Naive thymus-derived CD8-positive, alpha-beta T cell (primary cell): ENCODE measurements at regions of chr12 and their contacts with region 1.

Region 1: DNA sequence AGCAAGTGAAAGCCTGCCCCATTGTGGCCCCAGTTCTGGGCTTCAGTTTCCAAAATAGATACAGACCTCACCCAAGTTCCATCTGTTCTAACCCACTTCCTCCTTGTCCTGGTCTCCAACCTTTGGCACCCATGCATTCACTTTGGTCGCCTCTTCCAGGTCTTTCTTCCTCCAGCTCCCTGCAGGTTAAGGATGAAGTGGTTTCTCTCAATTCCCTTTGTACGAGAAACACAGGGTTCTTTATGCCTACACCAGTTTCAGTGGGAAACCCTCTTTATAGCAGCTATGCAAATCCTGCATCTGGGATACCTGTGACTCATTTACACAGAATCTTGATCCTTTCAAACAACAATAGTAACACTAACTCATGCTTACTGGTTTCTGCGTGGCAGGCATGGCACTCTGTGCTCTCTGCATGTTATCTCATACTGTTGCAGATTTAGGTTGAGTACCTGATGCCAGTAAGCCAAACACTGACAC is 110.6 kb upstream of the AMIGO2 start:
- DNase-seq: no peak
- ATAC-seq: no peak
- H3K4me3 Mint-ChIP-seq: peak overlapping the region in 9 of 10 donors; percentile 40 to 87 (median 80)
- H3K27ac Mint-ChIP-seq: peak overlapping the region; percentile 79 to 100 (median 92)
- H3K4me1 Mint-ChIP-seq: peaks cover 56 to 95% (median 89%) of the 10 kb centered on the region in 4 donors
- H3K27me3 Mint-ChIP-seq: no peaks in the 10 kb centered on the region

Region 2: DNA sequence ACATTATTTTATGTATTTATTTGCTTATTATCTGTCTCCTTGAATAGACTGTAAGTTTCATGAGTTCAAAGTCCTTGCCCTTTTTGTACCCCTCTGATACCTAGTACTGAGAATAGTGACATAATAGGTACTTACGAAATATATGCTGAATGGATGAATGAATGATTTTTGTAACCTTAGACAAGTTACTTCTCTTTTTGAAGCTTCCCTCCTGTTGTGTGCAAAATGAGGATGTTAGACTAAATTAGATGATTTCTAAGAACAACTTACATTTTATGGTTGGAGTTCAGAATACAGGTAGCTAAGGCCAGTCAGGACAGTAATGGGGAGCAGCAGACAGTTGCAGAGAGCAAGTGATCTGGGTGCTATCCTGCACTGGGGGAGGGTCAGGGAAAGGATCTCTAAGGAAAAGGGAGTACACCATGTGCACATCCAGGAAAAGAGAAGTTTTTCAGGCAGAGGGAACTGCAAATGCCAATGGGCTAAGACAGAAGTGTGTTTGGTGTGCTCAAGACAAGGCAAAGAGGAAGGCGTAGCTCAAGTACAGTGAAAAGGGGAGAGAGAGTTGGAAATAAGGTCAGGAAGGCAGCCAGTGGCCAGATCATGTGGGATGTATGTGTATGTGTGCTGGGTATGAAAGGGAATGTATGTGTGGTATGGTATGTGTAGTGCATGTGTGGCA is 51.2 kb before region 1 on chr12:
- POLR2A ChIA-PET with region 1: no interaction called
- DNase-seq: no peak
- ATAC-seq: no peak
- H3K4me3 Mint-ChIP-seq: no peak overlapping the region
- H3K27ac Mint-ChIP-seq: peak overlapping the region in 4 of 10 donors; percentile 7 to 27 (median 16)
- H3K4me1 Mint-ChIP-seq: peaks cover 6 to 17% (median 7%) of the 10 kb centered on the region in 4 donors
- H3K27me3 Mint-ChIP-seq: no peaks in the 10 kb centered on the region

Region 3: DNA sequence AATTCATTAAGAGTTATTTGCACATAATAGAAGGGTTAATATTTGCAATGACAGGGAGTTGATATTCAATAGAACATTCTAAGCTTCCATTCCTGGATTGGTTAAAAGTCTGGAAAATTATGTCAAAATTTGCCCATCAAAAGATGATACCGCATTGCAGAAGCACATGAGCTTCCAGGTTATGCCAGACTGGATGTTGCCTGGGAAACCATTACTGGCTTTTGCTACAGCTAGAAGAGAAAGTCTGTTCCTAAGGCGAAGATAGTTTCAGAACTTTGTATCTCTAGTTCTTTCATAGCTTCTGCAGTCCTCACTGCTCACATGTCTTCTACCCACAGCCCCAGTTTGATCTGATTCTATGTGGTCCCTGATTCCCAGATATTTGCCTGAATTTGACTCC is 11.9 kb after region 1 on chr12:
- POLR2A ChIA-PET with region 1: interaction called, 211 read pairs
- DNase-seq: no peak
- ATAC-seq: no peak
- H3K4me3 Mint-ChIP-seq: peak overlapping the region in 4 of 10 donors; percentile 26 to 35 (median 34)
- H3K27ac Mint-ChIP-seq: peak overlapping the region; percentile 37 to 98 (median 78)
- H3K4me1 Mint-ChIP-seq: peaks cover 47 to 86% (median 85%) of the 10 kb centered on the region in 4 donors
- H3K27me3 Mint-ChIP-seq: no peaks in the 10 kb centered on the region

Region 4: DNA sequence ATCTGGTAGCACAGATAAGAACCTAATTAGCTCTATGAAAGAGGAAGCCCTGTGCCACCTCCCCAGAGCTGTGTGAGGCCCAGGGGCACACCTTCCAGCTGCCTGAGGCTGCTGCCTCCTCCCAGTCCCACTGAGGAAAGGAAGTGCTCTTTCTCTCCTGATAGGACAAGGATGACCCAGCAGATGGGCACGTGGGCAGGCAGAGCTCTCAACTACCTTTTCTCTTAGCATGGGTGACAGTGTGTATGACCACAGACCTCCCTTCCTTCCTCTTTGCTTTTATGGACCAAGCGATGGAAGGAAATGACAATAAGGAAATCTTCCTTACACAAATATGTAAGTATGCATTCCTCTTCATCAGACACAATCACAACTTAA is 17.0 kb after region 1 on chr12:
- POLR2A ChIA-PET with region 1: interaction called, 211 read pairs
- DNase-seq: peak in 8 of 10 donors; percentile 18 to 70 (median 40)
- ATAC-seq: peak; percentile 41 to 59
- H3K4me3 Mint-ChIP-seq: peak overlapping the region; percentile 62 to 98 (median 86)
- H3K27ac Mint-ChIP-seq: peak overlapping the region; percentile 83 to 99 (median 91)
- H3K4me1 Mint-ChIP-seq: peaks cover 45 to 87% (median 83%) of the 10 kb centered on the region in 4 donors
- H3K27me3 Mint-ChIP-seq: no peaks in the 10 kb centered on the region

Region 5: DNA sequence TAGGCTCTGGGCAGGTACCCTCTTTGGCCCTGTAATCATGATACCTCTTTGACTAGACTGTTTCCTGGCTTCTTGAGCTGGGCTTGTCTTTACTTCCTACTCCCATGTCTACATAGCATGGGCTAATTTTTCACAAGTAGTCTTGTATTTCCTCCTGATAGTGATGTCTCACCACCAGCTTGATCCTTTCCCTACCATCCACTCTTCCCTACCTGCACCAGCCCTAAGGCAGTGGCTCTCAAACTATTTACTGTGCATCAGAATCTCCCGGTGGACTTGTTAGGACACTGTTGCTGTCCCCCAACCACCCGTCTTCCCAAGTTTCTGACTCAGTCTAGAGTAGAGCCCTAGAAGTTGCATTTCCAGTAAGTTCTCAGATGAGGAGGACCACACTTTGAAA is 52.1 kb after region 1 on chr12:
- POLR2A ChIA-PET with region 1: no interaction called
- DNase-seq: no peak
- ATAC-seq: no peak
- H3K4me3 Mint-ChIP-seq: no peak overlapping the region
- H3K27ac Mint-ChIP-seq: peak overlapping the region; percentile 22 to 86 (median 56)
- H3K4me1 Mint-ChIP-seq: peaks cover 18 to 68% (median 41%) of the 10 kb centered on the region in 4 donors
- H3K27me3 Mint-ChIP-seq: no peaks in the 10 kb centered on the region